Activated T-helper 2 cell treated with anti-CD3 and anti-CD28 coated beads, Interferon-gamma antibody, Interleukin-2, Interleukin-4, amounts not matched to agents 10 μg/mL and 5 μg/mL and 100 μg/mL, durations not matched to agents 14 hours and 24 hours and 36 hours (primary cell): ENCODE measurements at regions of chr5 and their contacts with region 1.

Region 1: GRCh38 chr5:69093771-69094482 is at the start of gene SLC30A5:
- DNase-seq: peak; percentile 99
- H3K4me3 Mint-ChIP-seq: peak within 1 kb of the TSS; percentile 92
- H3K27ac Mint-ChIP-seq: peak within 1 kb of the TSS; percentile 94
- H3K4me1 Mint-ChIP-seq: peaks cover 23% of the 10 kb centered on the region
- H3K27me3 Mint-ChIP-seq: no peaks in the 10 kb centered on the region
- total RNA-seq, gene SLC30A5: 59.6 and 64.1 TPM in 2 replicates

Region 2: GRCh38 chr5:69166686-69167492 is 73.0 kb after region 1 on chr5 and contains the start of gene CCNB1:
- intact Hi-C with region 1: loop called (anchors 1 kb)
- DNase-seq: peak; percentile 99
- H3K4me3 Mint-ChIP-seq: peak within 1 kb of the TSS; percentile 94
- H3K27ac Mint-ChIP-seq: peak within 1 kb of the TSS; percentile 69
- H3K4me1 Mint-ChIP-seq: peaks cover 32% of the 10 kb centered on the region
- H3K27me3 Mint-ChIP-seq: no peaks in the 10 kb centered on the region
- total RNA-seq, gene CCNB1: 152 and 164 TPM in 2 replicates

Region 3: GRCh38 chr5:69217548-69218526 is 123.9 kb after region 1 on chr5:
- intact Hi-C with region 1: loop called (anchors 1 kb)
- DNase-seq: peak; percentile 88
- H3K4me3 Mint-ChIP-seq: peak overlapping the region; percentile 98
- H3K27ac Mint-ChIP-seq: peak overlapping the region; percentile 97
- H3K4me1 Mint-ChIP-seq: peaks cover 10% of the 10 kb centered on the region
- H3K27me3 Mint-ChIP-seq: no peaks in the 10 kb centered on the region

Region 4: DNA sequence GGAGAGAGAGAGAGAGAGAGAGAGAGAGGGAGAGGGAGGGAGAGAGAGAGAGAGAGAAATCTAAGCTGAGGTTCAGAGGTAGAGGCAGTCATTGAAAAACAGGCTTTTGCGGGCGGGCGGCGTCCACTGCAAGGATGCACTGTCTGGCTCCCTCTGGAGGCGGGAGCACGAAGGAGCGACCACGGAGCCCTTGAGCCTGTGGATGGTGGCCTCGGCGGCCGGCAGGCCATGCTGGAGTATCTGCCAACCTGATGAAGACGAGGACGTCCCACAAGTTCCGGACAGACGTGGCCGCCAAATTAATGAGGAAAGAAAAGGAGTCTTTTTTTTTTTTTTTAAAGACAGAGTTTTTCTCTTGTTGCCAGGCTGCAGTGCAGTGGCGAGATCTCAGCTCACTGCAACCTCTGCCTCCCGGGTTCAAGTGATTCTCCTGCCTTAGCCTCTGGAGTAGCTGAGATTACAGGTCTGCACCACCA is 240.9 kb after region 1 on chr5:
- intact Hi-C with region 1: loop called (anchors 1 kb)
- DNase-seq: peak; percentile 71
- H3K4me3 Mint-ChIP-seq: peak overlapping the region; percentile 33
- H3K27ac Mint-ChIP-seq: no peak overlapping the region
- H3K4me1 Mint-ChIP-seq: peaks cover 14% of the 10 kb centered on the region
- H3K27me3 Mint-ChIP-seq: no peaks in the 10 kb centered on the region